Right ventricle myocardium superior (tissue), 1 donor: ENCODE measurements at regions of chr3 and their contacts with region 1.

Region 1: DNA sequence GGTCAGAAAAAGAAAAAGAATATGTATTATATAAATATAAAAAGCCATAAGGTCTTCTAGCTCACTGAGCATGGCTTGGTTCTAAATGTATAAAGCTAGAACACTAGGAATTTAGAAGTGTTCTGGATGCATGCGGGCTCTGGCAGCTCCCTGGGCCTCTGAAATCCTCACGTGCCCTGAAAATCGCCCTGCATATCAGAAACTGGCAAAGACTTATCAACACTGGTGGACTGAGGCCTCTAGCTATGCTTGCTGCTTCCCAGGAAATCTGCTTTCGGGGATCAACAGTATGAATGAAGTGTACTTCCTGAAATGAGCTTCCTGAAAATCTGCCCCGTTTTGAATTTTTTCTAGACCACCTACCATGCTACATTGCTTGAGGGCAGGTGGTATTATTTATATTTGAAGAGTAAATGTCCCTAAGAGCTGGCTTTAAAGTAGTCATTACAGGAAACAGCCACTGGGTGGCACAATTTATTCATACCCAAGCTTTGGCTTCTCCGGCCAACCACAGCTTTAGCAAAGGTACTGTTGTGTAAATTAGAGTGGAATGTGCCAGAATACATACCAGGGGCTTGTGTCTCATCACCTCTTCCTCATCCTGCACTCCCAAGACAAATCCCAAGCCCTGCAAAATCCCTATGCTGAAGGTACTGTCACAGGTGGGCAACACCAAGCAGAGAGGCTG is 17.7 kb downstream of the CRTAP start:
- DNase-seq: no peak
- ATAC-seq: peak; percentile 90

Region 2: GRCh38 chr3:32794487-32795308 is 336.8 kb before region 1 on chr3:
- intact Hi-C with region 1: no loop called
- DNase-seq: no peak
- ATAC-seq: no peak

Region 3: GRCh38 chr3:32960404-32961170 is 170.9 kb before region 1 on chr3:
- intact Hi-C with region 1: no loop called
- DNase-seq: no peak
- ATAC-seq: no peak

Region 4: DNA sequence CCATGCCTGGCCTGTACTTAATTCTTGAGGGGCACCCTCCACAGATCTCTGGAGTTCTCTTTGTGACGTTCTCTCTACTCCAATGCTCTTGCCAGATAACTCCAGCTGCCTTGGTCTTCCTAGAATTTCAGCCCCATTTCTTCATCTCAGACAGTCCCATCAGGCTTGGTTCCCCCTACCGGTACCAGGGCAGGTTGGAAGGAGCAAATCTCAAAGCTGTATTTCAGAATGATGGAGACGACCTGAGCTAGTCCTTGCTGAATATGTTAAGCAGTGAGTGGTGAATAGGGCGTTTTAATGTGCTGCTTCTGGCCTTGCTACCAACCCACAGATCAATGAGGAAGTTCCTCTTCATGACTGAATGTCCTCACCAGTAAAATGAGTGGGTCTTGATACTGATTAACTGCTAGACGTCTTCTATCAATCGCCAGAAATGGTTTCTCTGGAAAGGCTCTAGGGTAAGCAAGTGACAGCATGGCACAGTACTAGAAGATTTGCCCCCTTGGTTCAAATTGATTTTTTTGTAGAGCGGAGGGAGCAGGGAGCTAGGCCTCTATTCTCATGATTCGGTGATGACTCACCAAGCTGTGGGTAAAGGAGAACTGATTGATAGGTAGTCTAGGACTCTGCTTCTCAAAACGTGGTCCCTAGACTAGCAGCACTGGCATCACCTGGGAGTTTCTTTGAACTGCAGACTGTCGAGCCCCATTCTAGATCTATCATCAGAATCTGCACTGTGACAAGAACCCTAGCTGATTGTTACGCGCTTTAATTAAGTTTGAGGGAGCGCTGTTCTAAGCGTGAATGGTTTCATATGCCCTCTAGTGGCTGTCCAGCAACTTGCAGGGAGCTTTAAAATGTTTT is 241.0 kb after region 1 on chr3:
- intact Hi-C with region 1: loop called (anchors 5 kb)
- DNase-seq: no peak
- ATAC-seq: peak; percentile 74